Esophagus squamous epithelium (tissue), 5 donors: ENCODE measurements at regions of chr5 and their contacts with region 1.

Region 1: DNA sequence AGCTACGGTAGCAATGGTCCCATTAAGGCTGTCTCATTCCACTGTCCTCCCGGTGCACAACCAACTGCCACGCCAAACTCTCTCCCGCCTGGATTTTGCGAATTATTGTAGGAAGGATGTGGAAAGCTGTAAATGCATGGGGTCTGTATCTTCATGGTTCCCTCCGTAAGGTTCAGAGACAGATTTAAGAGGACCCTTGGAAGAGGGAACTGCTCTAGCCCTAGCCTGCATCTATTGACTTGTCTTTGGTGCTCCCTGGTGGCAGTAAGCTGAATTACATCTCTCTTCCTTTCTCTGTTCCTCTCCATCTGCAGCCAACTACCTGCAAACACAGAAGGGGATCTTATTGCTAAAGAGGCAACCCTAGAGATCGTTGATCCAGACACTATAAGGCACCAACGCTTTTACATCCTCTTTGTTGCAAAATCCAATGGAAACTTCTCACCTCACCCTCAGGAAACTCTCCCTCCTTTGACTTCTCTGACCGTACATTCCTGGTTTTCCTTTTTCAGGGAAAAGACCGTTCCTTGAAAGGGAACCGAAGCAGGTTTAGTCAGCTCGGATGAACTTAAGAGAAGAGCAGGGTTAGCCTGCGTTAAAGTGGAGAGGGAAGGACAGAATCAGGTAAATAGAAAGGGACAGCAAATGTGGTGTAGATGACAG is 11.9 kb downstream of the CAPSL start:
- DNase-seq: no peak
- H3K4me3 ChIP-seq: no peak overlapping the region
- H3K27ac ChIP-seq: no peak overlapping the region
- H3K4me1 ChIP-seq: peaks cover 0 to 16% (median 0%) of the 10 kb centered on the region in 3 donors
- H3K27me3 ChIP-seq: peaks cover 0 to 60% (median 0%) of the 10 kb centered on the region in 4 donors
- CTCF ChIP-seq: peak; percentile 68 to 86 (median 80)
- POLR2A ChIP-seq: no peak

Region 2: GRCh38 chr5:35089334-35090314 is 836.9 kb before region 1 on chr5:
- intact Hi-C with region 1: loop called (anchors 5 kb)
- DNase-seq: no peak
- H3K4me3 ChIP-seq: no peak overlapping the region
- H3K27ac ChIP-seq: no peak overlapping the region
- H3K4me1 ChIP-seq: no peaks in the 10 kb centered on the region
- H3K27me3 ChIP-seq: no peaks in the 10 kb centered on the region
- CTCF ChIP-seq: peak; percentile 53 to 80 (median 66)
- POLR2A ChIP-seq: no peak

Region 3: GRCh38 chr5:35617435-35618303 is 308.9 kb before region 1 on chr5 and contains the start of gene SPEF2:
- intact Hi-C with region 1: loop called (anchors 10 kb)
- DNase-seq: peak; percentile 10
- H3K4me3 ChIP-seq: peak within 1 kb of the TSS; percentile 48 to 84 (median 70)
- H3K27ac ChIP-seq: peak within 1 kb of the TSS in 3 of 4 donors; percentile 29 to 65 (median 46)
- H3K4me1 ChIP-seq: peaks cover 4 to 18% (median 7%) of the 10 kb centered on the region in 3 donors
- H3K27me3 ChIP-seq: no peaks in the 10 kb centered on the region
- CTCF ChIP-seq: peak; percentile 61 to 74 (median 66)
- POLR2A ChIP-seq: no peak
- total RNA-seq, gene SPEF2: 1.2 to 6.1 (median 3.0) TPM

Region 4: DNA sequence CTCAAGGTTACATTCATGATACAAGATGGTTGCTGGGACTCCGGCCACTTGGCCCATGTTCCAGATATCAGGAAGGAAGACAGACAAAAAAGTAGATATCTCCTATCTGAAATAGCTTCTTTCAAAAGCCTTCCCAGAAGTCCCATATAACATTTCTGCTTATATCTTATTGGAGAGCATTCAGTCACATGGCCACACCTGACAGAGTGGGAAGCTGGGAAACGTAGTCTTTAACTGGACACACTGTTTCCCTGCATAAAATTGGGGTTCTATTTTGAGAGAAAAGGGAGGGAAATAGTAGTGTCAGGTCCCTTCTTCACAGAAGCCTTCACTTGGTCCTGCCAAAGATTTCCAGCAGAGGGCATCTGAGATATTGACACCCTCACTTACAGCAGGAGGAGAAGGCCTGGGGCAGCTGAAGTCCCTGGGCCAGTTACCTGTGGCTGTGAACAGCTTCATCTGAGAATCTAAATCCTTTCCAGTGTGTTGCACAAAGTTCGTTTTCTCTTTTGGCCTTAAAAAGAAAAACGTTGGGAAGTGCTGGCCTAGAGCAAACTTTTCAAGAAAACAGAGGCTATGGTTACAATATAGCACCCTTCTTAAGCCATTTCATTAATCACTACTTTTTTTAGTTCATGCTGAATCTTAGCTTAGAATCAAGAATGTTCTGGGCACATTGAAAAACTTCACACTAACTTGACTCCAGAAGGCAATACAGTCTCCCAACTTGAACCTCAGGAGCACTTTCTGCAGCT is 275.3 kb before region 1 on chr5:
- intact Hi-C with region 1: loop called (anchors 10 kb)
- DNase-seq: no peak
- H3K4me3 ChIP-seq: no peak overlapping the region
- H3K27ac ChIP-seq: no peak overlapping the region
- H3K4me1 ChIP-seq: no peaks in the 10 kb centered on the region
- H3K27me3 ChIP-seq: no peaks in the 10 kb centered on the region
- CTCF ChIP-seq: peak in 4 of 6 experiments; percentile 17 to 48 (median 27)
- POLR2A ChIP-seq: no peak

Region 5: GRCh38 chr5:35777358-35778087 is 149.0 kb before region 1 on chr5:
- intact Hi-C with region 1: loop called (anchors 2 kb)
- DNase-seq: no peak
- H3K4me3 ChIP-seq: no peak overlapping the region
- H3K27ac ChIP-seq: no peak overlapping the region
- H3K4me1 ChIP-seq: peaks cover 0 to 11% (median 0%) of the 10 kb centered on the region in 3 donors
- H3K27me3 ChIP-seq: no peaks in the 10 kb centered on the region
- CTCF ChIP-seq: peak; percentile 25 to 62 (median 48)
- POLR2A ChIP-seq: no peak